Right cardiac atrium (tissue), 5 donors: ENCODE measurements at regions of chr19 and their contacts with region 1.

Region 1: GRCh38 chr19:52922841-52923777 is at the start of gene ZNF888:
- DNase-seq: peak; percentile 87 to 95 (median 95)
- ATAC-seq: peak; percentile 100
- H3K4me3 ChIP-seq: peak within 1 kb of the TSS; percentile 85
- H3K27ac ChIP-seq: peak within 1 kb of the TSS; percentile 74
- H3K4me1 ChIP-seq: no peaks in the 10 kb centered on the region
- H3K27me3 ChIP-seq: no peaks in the 10 kb centered on the region
- total RNA-seq, gene ZNF888: 1.7 to 1.9 (median 1.8) TPM

Region 2: GRCh38 chr19:52962394-52963246 is 39.5 kb after region 1 on chr19 and contains the start of gene ZNF816:
- intact Hi-C with region 1: loop called in 1 of 4 experiments (anchors 2 kb)
- DNase-seq: peak; percentile 98 to 99 (median 99)
- ATAC-seq: peak; percentile 99 to 100
- H3K4me3 ChIP-seq: peak within 1 kb of the TSS; percentile 83
- H3K27ac ChIP-seq: peak within 1 kb of the TSS; percentile 91
- H3K4me1 ChIP-seq: no peaks in the 10 kb centered on the region
- H3K27me3 ChIP-seq: no peaks in the 10 kb centered on the region
- total RNA-seq, gene ZNF816: 4.1 to 8.3 (median 5.8) TPM

Region 3: DNA sequence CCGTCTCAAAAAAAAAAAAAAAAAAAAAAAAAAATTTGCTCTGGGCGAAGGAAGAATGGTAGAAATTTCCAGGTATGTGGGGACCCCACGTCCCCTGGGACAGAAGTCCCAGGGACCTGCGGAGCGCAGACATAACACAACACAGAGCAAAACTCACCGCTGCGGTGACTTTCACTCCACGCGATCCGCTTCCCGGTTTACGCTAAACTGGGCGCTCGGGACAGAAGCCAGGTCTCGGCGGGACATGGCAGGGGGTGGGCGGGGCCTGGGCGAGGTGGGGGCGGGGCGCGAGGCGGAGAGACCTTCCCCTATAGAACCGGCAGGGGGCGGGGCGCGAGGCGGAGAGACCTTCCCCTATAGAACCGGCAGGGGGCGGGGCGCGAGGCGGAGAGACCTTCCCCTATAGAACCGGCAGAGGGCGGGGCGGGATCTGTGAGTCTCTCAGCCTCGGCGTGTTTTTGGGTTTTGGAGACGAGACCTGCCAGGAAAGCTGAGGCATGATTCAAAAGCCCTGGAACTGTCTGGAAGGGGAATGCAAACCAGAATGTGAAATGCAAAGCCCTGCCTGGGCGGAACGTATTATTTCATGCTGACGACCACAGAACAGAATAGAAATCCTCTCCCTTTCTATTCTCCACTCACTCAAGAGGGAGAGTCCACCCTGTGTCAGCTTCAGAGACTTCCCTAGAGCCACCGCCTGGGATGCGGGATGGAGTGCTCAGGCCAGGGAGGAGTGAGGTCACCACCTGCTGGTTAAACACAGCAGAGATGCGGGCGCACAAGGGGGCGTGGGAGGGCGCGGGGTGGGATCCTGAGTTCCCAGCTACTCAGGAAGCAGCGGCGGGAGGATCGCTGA is 70.4 kb after region 1 on chr19:
- intact Hi-C with region 1: no loop called
- DNase-seq: peak; percentile 77 to 92 (median 90)
- ATAC-seq: peak; percentile 95
- H3K4me3 ChIP-seq: peak overlapping the region; percentile 59
- H3K27ac ChIP-seq: peak overlapping the region; percentile 9
- H3K4me1 ChIP-seq: no peaks in the 10 kb centered on the region
- H3K27me3 ChIP-seq: no peaks in the 10 kb centered on the region

Region 4: DNA sequence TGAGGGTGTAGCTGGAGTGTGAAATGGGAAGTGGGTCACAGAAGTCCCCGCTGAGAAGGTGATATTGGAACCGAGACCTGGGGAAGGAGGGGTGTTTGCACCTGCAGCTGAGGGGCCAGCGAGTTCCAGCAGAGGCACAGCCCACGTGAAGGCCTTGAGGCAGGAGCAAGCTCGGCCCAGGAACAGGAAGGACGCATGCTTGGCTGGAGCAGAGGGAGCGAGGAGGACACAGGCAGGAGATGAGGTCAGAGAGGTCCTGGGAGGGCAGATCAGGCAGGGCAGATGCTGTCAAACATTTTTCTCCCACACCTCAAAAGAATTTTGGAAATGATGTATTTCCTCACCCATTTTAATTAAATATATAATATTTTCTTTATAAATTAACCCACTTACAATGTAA is 200.3 kb after region 1 on chr19:
- intact Hi-C with region 1: no loop called
- DNase-seq: no peak
- ATAC-seq: no peak
- H3K4me3 ChIP-seq: no peak overlapping the region
- H3K27ac ChIP-seq: no peak overlapping the region
- H3K4me1 ChIP-seq: no peaks in the 10 kb centered on the region
- H3K27me3 ChIP-seq: no peaks in the 10 kb centered on the region